Naive thymus-derived CD4-positive, alpha-beta T cell (primary cell): ENCODE measurements at regions of chr9 and their contacts with region 1.

Region 1: GRCh38 chr9:114662081-114662989 is 4.7 kb upstream of the TEX53 start:
- DNase-seq: peak; percentile 15 to 62 (median 48)
- ATAC-seq: peak; percentile 91
- H3K4me3 ChIP-seq: no peak overlapping the region
- H3K4me3 Mint-ChIP-seq: no peak overlapping the region
- H3K27ac ChIP-seq: no peak overlapping the region
- H3K27ac Mint-ChIP-seq: peak overlapping the region in 2 of 9 donors; percentile 18 to 38
- H3K4me1 ChIP-seq: no peaks in the 10 kb centered on the region
- H3K4me1 Mint-ChIP-seq: peaks cover 0 to 14% (median 4%) of the 10 kb centered on the region in 7 donors
- H3K27me3 ChIP-seq: peaks cover 0 to 5% of the 10 kb centered on the region in 2 donors
- H3K27me3 Mint-ChIP-seq: peaks cover 0 to 23% (median 4%) of the 10 kb centered on the region in 5 donors

Region 2: GRCh38 chr9:114465903-114466530 is 196.3 kb before region 1 on chr9:
- CTCF ChIA-PET with region 1: no interaction called
- POLR2A ChIA-PET with region 1: no interaction called
- intact Hi-C with region 1: no loop called
- DNase-seq: no peak
- ATAC-seq: no peak
- H3K4me3 ChIP-seq: no peak overlapping the region
- H3K4me3 Mint-ChIP-seq: no peak overlapping the region
- H3K27ac ChIP-seq: no peak overlapping the region
- H3K27ac Mint-ChIP-seq: no peak overlapping the region
- H3K4me1 ChIP-seq: no peaks in the 10 kb centered on the region
- H3K4me1 Mint-ChIP-seq: peaks cover 0 to 3% (median 0%) of the 10 kb centered on the region in 7 donors
- H3K27me3 ChIP-seq: no peaks in the 10 kb centered on the region
- H3K27me3 Mint-ChIP-seq: no peaks in the 10 kb centered on the region

Region 3: GRCh38 chr9:114633438-114634089 is 28.8 kb before region 1 on chr9:
- CTCF ChIA-PET with region 1: no interaction called
- POLR2A ChIA-PET with region 1: no interaction called
- intact Hi-C with region 1: no loop called
- DNase-seq: no peak
- ATAC-seq: no peak
- H3K4me3 ChIP-seq: no peak overlapping the region
- H3K4me3 Mint-ChIP-seq: no peak overlapping the region
- H3K27ac ChIP-seq: no peak overlapping the region
- H3K27ac Mint-ChIP-seq: peak overlapping the region in 1 of 9 donors; percentile 41
- H3K4me1 ChIP-seq: no peaks in the 10 kb centered on the region
- H3K4me1 Mint-ChIP-seq: peaks cover 0 to 5% (median 0%) of the 10 kb centered on the region in 7 donors
- H3K27me3 ChIP-seq: no peaks in the 10 kb centered on the region
- H3K27me3 Mint-ChIP-seq: no peaks in the 10 kb centered on the region

Region 4: GRCh38 chr9:114968671-114969070 is 306.3 kb after region 1 on chr9:
- CTCF ChIA-PET with region 1: no interaction called
- POLR2A ChIA-PET with region 1: no interaction called
- intact Hi-C with region 1: no loop called
- DNase-seq: no peak
- ATAC-seq: peak; percentile 90
- H3K4me3 ChIP-seq: no peak overlapping the region
- H3K4me3 Mint-ChIP-seq: peak overlapping the region in 4 of 10 donors; percentile 4 to 20 (median 17)
- H3K27ac ChIP-seq: no peak overlapping the region
- H3K27ac Mint-ChIP-seq: no peak overlapping the region
- H3K4me1 ChIP-seq: peaks cover 0 to 12% of the 10 kb centered on the region in 2 donors
- H3K4me1 Mint-ChIP-seq: peaks cover 7 to 24% (median 22%) of the 10 kb centered on the region in 7 donors
- H3K27me3 ChIP-seq: peaks cover 0 to 3% of the 10 kb centered on the region in 2 donors
- H3K27me3 Mint-ChIP-seq: no peaks in the 10 kb centered on the region

Region 5: DNA sequence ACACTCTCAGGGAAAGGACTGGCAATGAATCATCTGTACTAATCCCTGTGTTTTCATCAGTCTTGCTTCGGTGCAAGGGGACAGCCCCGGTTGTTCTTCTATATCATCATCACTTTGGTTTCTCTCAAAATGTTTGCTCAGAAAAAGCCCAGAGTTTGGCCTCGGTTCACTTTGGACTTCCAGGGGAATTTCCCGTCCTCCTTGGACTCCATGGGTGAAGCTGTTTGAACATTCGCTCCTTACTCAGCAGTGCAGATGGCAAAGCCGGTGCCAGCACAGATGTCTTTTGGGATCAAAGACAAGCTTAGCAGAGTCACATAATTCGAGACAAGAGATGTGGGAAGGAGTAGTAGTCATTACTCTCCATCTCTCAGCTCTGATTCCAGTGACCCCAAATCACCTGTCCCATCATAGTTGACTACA is 337.9 kb after region 1 on chr9:
- CTCF ChIA-PET with region 1: no interaction called
- POLR2A ChIA-PET with region 1: no interaction called
- intact Hi-C with region 1: no loop called
- DNase-seq: peak in 1 of 9 donors; percentile 42
- ATAC-seq: no peak
- H3K4me3 ChIP-seq: no peak overlapping the region
- H3K4me3 Mint-ChIP-seq: no peak overlapping the region
- H3K27ac ChIP-seq: no peak overlapping the region
- H3K27ac Mint-ChIP-seq: no peak overlapping the region
- H3K4me1 ChIP-seq: peaks cover 0 to 3% of the 10 kb centered on the region in 2 donors
- H3K4me1 Mint-ChIP-seq: peaks cover 0 to 22% (median 13%) of the 10 kb centered on the region in 7 donors
- H3K27me3 ChIP-seq: no peaks in the 10 kb centered on the region
- H3K27me3 Mint-ChIP-seq: peaks cover 0 to 4% (median 3%) of the 10 kb centered on the region in 5 donors

Region 6: DNA sequence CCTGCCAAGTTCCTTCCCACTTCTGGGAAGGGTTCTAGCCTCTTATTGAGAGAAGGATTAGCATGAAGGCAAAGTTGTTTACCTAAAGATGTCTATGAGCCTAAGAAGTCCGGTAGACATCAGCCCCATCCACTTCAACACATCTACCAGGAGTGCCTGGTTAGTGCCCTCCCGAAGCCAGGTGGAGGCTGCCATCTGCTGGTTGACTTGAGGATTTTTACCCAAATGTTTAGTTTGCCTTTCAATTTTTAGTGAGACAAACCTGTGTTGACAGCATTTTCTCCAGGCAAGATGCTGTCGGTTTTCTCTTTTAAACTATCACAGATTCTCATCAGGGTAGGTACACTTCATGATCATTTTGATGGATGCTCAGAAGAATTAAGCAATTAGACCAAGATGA is 351.7 kb after region 1 on chr9:
- CTCF ChIA-PET with region 1: interaction called, 4 read pairs
- POLR2A ChIA-PET with region 1: no interaction called
- intact Hi-C with region 1: loop called (anchors 1 kb)
- DNase-seq: peak; percentile 57 to 84 (median 79)
- ATAC-seq: peak; percentile 88
- H3K4me3 ChIP-seq: no peak overlapping the region
- H3K4me3 Mint-ChIP-seq: peak overlapping the region in 1 of 10 donors; percentile 24
- H3K27ac ChIP-seq: no peak overlapping the region
- H3K27ac Mint-ChIP-seq: peak overlapping the region in 2 of 9 donors; percentile 12 to 79
- H3K4me1 ChIP-seq: peaks cover 0 to 4% of the 10 kb centered on the region in 2 donors
- H3K4me1 Mint-ChIP-seq: peaks cover 5 to 59% (median 12%) of the 10 kb centered on the region in 7 donors
- H3K27me3 ChIP-seq: no peaks in the 10 kb centered on the region
- H3K27me3 Mint-ChIP-seq: peaks cover 4 to 14% (median 7%) of the 10 kb centered on the region in 5 donors

Region 7: DNA sequence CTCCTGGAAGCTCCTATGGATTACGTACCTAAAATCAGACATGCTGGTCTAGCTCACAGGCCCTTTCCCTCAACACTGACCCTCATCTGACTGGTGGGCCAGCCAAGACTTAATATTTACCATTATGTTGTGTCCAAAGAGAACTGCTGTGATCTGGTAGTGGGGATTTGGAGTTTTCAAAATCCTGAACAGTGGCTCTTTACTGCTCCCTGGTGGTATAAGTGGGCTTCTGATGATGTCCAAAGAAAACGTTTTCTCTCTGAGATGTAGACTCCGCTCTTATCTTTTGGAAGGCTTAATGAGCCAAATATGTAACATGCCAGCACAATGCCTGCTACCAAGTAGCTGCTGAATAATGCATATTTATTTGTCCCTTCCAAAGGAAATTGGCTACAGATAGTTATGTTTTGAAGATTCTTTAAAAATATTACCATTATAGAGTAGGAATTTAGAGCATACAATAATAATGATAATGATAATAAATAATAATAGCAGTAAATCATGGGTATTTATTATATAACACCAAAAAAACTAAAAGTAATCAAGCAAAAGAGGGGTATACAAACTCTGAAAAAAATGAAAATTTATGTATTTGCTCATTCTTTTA is 862.2 kb after region 1 on chr9:
- CTCF ChIA-PET with region 1: no interaction called
- POLR2A ChIA-PET with region 1: no interaction called
- intact Hi-C with region 1: loop called in 1 of 2 experiments (anchors 1 kb)
- DNase-seq: peak in 4 of 9 donors; percentile 4 to 16 (median 8)
- ATAC-seq: no peak
- H3K4me3 ChIP-seq: no peak overlapping the region
- H3K4me3 Mint-ChIP-seq: no peak overlapping the region
- H3K27ac ChIP-seq: no peak overlapping the region
- H3K27ac Mint-ChIP-seq: no peak overlapping the region
- H3K4me1 ChIP-seq: no peaks in the 10 kb centered on the region
- H3K4me1 Mint-ChIP-seq: no peaks in the 10 kb centered on the region
- H3K27me3 ChIP-seq: no peaks in the 10 kb centered on the region
- H3K27me3 Mint-ChIP-seq: peaks cover 12 to 35% (median 18%) of the 10 kb centered on the region in 5 donors

Region 8: DNA sequence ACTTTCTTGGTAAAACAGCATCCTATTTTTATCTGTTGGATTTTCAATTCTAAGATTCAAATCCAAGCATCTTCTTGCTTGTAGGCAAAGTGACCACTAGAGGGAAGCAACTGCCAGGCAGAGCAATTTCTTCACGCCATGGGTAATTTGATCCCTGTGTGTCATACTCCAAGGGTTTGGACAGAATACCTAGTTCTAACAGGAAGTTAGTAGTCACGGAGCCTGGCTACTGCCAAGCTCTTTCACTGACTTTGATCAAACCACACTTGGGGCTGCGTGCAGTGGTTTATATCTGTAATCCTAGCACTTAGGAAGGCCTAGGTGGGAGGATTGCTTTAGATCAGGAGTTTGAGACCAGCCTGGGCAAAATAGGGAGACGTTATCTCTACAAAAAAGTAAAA is 929.2 kb after region 1 on chr9:
- CTCF ChIA-PET with region 1: no interaction called
- POLR2A ChIA-PET with region 1: no interaction called
- intact Hi-C with region 1: loop called in 1 of 2 experiments (anchors 5 kb)
- DNase-seq: no peak
- ATAC-seq: no peak
- H3K4me3 ChIP-seq: no peak overlapping the region
- H3K4me3 Mint-ChIP-seq: no peak overlapping the region
- H3K27ac ChIP-seq: no peak overlapping the region
- H3K27ac Mint-ChIP-seq: no peak overlapping the region
- H3K4me1 ChIP-seq: no peaks in the 10 kb centered on the region
- H3K4me1 Mint-ChIP-seq: no peaks in the 10 kb centered on the region
- H3K27me3 ChIP-seq: no peaks in the 10 kb centered on the region
- H3K27me3 Mint-ChIP-seq: peaks cover 16 to 38% (median 22%) of the 10 kb centered on the region in 5 donors

Region 9: GRCh38 chr9:116494815-116495634 is 1832.7 kb after region 1 on chr9:
- CTCF ChIA-PET with region 1: no interaction called
- POLR2A ChIA-PET with region 1: no interaction called
- intact Hi-C with region 1: loop called in 1 of 2 experiments (anchors 5 kb)
- DNase-seq: peak in 4 of 9 donors; percentile 3 to 23 (median 6)
- ATAC-seq: no peak
- H3K4me3 ChIP-seq: no peak overlapping the region
- H3K4me3 Mint-ChIP-seq: no peak overlapping the region
- H3K27ac ChIP-seq: no peak overlapping the region
- H3K27ac Mint-ChIP-seq: no peak overlapping the region
- H3K4me1 ChIP-seq: no peaks in the 10 kb centered on the region
- H3K4me1 Mint-ChIP-seq: peaks cover 0 to 4% (median 0%) of the 10 kb centered on the region in 7 donors
- H3K27me3 ChIP-seq: no peaks in the 10 kb centered on the region
- H3K27me3 Mint-ChIP-seq: no peaks in the 10 kb centered on the region

Region 10: GRCh38 chr9:116572095-116572748 is 1909.9 kb after region 1 on chr9:
- CTCF ChIA-PET with region 1: no interaction called
- POLR2A ChIA-PET with region 1: no interaction called
- intact Hi-C with region 1: loop called in 1 of 2 experiments (anchors 5 kb)
- DNase-seq: peak in 1 of 9 donors; percentile 24
- ATAC-seq: peak; percentile 34
- H3K4me3 ChIP-seq: no peak overlapping the region
- H3K4me3 Mint-ChIP-seq: no peak overlapping the region
- H3K27ac ChIP-seq: no peak overlapping the region
- H3K27ac Mint-ChIP-seq: no peak overlapping the region
- H3K4me1 ChIP-seq: no peaks in the 10 kb centered on the region
- H3K4me1 Mint-ChIP-seq: no peaks in the 10 kb centered on the region
- H3K27me3 ChIP-seq: no peaks in the 10 kb centered on the region
- H3K27me3 Mint-ChIP-seq: no peaks in the 10 kb centered on the region

Region 11: DNA sequence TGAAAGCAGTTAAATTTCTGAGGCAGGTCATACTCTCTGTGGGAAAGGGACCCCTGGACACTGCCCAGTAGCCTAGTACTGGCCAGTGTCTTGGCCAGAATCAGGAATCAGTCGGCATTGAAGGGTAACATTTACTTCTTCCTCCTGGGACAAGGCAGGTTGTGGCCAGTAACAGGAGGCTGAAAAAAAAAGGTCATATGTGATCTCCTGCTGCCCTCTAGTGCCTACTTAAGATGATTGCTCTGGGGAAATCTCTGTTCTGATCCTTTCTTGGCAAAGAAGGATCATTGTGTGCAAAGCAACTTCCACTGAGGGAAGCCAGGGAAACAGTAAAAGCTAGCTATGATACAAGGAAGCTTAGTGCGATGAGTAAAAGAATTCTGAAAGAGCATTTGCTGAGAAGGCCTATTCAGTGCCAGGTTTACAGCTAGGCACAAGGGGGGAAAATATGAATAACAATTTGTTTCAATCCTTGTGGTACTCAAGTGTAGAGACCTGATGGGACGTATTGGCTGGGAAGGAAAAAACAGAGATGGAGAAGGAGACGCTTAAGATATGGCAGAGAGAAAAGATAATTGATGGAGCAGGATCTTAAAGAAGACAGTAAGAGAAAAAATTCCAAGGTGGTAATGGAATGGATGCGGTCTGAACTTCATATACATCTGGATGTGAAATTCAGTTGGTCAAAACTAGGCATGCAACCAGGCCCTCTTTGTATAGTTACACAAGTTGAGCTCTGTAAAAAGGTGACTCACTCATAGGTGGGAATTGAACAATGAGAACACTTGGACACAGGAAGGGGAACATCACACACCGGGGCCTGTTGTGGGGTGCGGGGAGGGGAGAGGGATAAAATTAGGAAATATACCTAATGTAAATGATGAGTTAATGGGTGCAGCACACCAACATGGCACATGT is 1999.0 kb after region 1 on chr9:
- CTCF ChIA-PET with region 1: no interaction called
- POLR2A ChIA-PET with region 1: no interaction called
- intact Hi-C with region 1: loop called in 1 of 2 experiments (anchors 5 kb)
- DNase-seq: peak in 6 of 9 donors; percentile 3 to 39 (median 25)
- ATAC-seq: no peak
- H3K4me3 ChIP-seq: no peak overlapping the region
- H3K4me3 Mint-ChIP-seq: no peak overlapping the region
- H3K27ac ChIP-seq: no peak overlapping the region
- H3K27ac Mint-ChIP-seq: no peak overlapping the region
- H3K4me1 ChIP-seq: no peaks in the 10 kb centered on the region
- H3K4me1 Mint-ChIP-seq: no peaks in the 10 kb centered on the region
- H3K27me3 ChIP-seq: no peaks in the 10 kb centered on the region
- H3K27me3 Mint-ChIP-seq: no peaks in the 10 kb centered on the region